ENCODE measurements at regions of chr2 and their contacts with region 1.

Region 1: GRCh38 chr2:1550658-1551316 is 137.5 kb downstream of the TPO start:
- DNase-seq: peak in 9 of 10 donors; percentile 41 to 95 (median 69)

Region 2: DNA sequence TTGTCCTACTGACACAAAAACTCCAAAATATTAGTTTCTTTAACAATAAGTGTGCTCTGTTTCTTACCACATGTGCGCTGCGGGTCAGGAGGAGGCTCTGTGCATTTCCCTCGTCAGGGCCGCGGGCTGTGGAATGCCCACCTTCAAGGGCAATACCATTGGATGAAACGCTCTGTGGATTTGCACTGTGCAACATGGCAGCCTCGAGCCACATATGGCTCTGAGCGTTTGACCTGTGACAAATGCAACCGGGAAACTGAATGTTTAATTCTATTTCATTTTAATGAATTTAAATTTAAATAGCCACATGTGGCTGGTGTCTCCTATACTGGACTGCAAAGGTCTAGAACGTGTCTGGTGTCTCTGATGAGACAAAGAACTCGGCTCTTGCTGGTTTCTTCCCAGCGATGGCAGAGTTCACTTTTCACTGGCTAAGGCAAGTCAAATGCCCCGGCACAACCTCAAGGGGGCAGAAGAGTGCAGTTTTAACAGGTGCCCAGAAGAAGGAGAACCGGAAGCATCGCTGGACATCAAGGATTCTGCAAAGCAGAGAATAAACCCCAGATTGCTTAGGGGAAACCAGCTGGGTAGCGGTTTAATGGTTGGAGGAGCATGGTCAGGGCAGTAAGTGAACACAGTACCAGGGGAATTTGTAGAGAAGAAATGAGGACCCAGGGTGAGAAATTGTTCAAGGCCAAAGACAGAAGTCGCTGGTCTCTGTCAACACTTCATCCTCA is 836.6 kb before region 1 on chr2:
- intact Hi-C with region 1: loop called (anchors 2 kb)
- DNase-seq: peak in 6 of 10 donors; percentile 32 to 92 (median 52)

Region 3: DNA sequence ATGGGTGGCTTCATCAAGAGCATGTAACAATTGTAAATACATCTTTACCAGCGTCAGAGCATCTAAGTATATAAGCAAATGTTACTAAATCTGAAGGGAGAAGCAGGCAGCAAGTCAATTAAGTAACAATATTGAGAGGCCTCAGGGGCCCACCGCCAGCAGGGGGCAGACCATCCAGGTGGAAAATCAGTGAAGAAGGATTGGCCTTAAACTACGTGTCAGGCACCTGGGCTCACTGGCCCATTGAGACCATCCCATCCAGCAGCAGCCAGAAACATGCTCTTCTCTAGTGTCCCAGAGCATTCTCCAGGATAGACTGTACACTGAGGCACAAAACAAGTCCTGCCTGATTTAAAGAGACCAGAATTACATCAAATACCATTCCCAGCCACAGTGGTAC is 696.3 kb before region 1 on chr2:
- intact Hi-C with region 1: loop called (anchors 5 kb)
- DNase-seq: peak in 3 of 10 donors; percentile 14 to 89 (median 33)

Region 4: GRCh38 chr2:953975-954686 is 596.7 kb before region 1 on chr2:
- intact Hi-C with region 1: loop called (anchors 2 kb)
- DNase-seq: no peak

Region 5: DNA sequence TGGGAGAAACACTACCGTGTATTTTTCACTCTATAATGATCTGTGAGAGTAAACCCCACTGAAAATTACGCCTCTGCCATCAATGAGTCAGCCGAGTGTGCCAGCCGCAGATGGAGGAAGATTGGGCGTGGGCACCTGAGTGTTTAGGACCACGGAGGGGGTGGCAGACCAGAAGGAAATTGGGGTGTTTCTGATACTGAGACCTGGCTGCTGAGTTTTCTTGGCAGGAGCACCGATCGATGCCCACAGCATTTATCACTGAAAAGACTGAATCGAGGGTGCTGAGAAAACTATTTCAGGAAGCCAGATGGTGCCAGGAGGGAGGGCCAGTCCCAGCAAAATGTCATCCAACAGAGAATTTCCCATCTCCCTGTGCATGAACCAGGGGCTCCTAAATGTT is 229.5 kb before region 1 on chr2:
- intact Hi-C with region 1: loop called (anchors 10 kb)
- DNase-seq: peak in 8 of 10 donors; percentile 35 to 91 (median 58)

Region 6: DNA sequence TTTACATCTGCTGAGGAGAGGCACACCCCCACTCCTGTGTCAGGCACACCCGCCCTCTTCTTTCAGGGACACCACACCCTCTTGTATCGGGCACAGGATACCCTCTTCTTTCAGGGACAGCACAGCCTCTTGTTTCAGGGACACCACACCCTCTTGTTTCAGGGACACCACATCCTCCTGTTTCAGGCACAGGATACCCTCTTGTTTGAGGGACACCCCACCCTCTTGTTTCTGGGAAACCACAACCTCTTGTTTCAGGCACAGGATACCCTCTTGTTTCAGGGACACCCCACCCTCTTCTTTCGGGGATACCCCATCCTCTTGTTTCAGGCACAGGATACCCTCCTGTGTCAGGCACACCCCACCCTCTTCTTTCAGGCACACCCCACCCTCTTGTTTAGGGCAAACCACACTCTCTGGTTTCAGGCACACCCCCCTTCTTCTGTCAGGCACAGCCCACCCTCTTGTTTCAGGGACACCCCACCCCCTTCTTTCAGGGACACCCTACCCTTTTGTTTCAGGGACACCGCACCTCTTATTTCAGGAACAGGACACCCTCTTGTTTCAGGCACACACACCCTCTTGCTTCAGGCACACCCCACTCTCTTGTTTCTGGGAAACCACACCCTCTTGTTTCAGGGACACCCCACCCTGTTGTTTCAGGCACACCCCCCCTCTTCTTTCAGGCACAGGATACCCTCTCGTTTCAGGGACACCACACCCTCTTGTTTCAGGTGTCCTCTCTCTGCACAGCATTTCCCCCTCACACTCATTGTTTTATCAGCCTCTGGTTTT is 41.3 kb before region 1 on chr2:
- intact Hi-C with region 1: no loop called
- DNase-seq: peak in 2 of 10 donors; percentile 16 to 35

Region 7: DNA sequence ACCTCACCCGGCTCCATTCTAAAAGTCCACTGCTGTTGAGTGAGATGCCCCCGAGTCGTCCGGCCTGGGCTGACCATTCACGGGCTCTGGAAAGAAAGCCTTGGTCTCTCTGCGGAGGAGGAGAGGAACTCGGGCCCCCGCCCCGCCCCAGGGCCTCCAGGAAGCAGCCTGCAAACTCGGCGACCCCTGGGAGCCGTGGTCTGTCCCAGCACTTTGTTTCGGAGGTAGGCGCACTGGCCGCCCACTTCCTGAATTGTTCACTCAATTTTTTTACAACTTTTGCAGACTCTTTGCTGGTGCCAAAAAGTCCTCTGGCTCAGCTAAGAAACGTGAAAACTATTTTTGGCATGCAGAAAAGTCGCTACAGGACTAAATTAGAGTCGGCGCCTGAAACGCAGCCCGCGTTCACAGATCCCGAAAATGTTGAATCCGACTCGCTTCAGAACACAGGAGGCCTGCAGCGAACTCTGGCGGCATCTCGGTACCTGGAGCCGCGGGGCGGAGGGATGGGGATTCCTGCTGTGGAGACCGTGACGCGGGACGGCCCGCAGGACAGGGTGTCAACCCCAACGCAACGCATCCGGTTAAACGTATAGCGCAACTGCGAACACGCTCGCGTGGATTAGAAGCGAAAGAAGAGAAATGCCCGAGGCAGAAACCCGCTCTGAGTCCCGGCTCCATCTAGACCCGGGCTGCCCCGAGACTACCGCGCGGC is 192.1 kb after region 1 on chr2:
- intact Hi-C with region 1: loop called (anchors 5 kb)
- DNase-seq: peak in 9 of 10 donors; percentile 38 to 94 (median 69)

Region 8: GRCh38 chr2:2795438-2796091 is 1244.8 kb after region 1 on chr2:
- intact Hi-C with region 1: no loop called
- DNase-seq: peak in 1 of 10 donors; percentile 80